Heart right ventricle (tissue), 16 donors: ENCODE measurements at regions of chr10 and their contacts with region 1.

Region 1: DNA sequence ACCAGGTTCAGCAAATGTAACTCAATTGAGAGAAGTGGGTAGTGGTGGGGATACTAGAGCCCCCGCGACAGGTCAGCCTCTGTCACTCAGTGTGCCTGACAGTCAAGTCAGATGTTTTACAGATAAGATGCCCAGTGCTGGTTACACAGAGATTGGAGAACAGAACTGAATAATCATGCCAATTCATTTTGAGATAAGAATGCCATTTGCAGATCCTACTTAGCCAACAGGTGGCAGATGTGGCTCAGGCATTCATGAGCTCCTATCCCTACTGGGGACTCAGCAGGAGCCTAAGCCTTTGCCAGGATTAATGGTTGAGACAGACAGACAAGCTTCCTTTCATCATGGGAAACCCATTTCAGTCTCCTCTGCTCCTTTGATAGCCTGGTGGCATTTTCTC is 137.8 kb downstream of the MAPK8 start:
- DNase-seq: no peak
- ATAC-seq: peak in 1 of 8 donors; percentile 34
- H3K4me3 ChIP-seq: no peak overlapping the region
- H3K27ac ChIP-seq: no peak overlapping the region
- H3K4me1 ChIP-seq: no peaks in the 10 kb centered on the region
- H3K27me3 ChIP-seq: no peaks in the 10 kb centered on the region
- CTCF ChIP-seq: peak in 7 of 9 donors; percentile 14 to 37 (median 33)

Region 2: GRCh38 chr10:48484911-48485310 is 40.6 kb after region 1 on chr10:
- intact Hi-C with region 1: loop called in 1 of 10 experiments (anchors 5 kb)
- DNase-seq: no peak
- ATAC-seq: no peak
- H3K4me3 ChIP-seq: no peak overlapping the region
- H3K27ac ChIP-seq: no peak overlapping the region
- H3K4me1 ChIP-seq: peaks cover 0 to 5% (median 0%) of the 10 kb centered on the region in 9 donors
- H3K27me3 ChIP-seq: no peaks in the 10 kb centered on the region
- CTCF ChIP-seq: no peak

Region 3: GRCh38 chr10:48670978-48671913 is 227.0 kb after region 1 on chr10:
- intact Hi-C with region 1: no loop called
- DNase-seq: no peak
- ATAC-seq: peak in 5 of 8 donors; percentile 43 to 67 (median 44)
- H3K4me3 ChIP-seq: peak overlapping the region in 1 of 10 donors; percentile 14
- H3K27ac ChIP-seq: peak overlapping the region in 4 of 10 donors; percentile 34 to 70 (median 38)
- H3K4me1 ChIP-seq: peaks cover 0 to 13% (median 0%) of the 10 kb centered on the region in 9 donors
- H3K27me3 ChIP-seq: no peaks in the 10 kb centered on the region
- CTCF ChIP-seq: no peak